ENCODE measurements at regions of chr7 and their contacts with region 1.

Region 1: GRCh38 chr7:129664029-129665012 is 52.8 kb downstream of the NRF1 start:
- DNase-seq: no peak
- ATAC-seq: peak; percentile 50 to 88 (median 78)
- H3K4me3 ChIP-seq: no peak overlapping the region
- H3K27ac ChIP-seq: no peak overlapping the region
- H3K4me1 ChIP-seq: no peaks in the 10 kb centered on the region
- H3K27me3 ChIP-seq: no peaks in the 10 kb centered on the region
- CTCF ChIP-seq: peak in 1 of 4 donors; percentile 15

Region 2: GRCh38 chr7:129825496-129826267 is 161.4 kb after region 1 on chr7:
- intact Hi-C with region 1: loop called in 2 of 3 experiments (anchors 5 to 10 kb)
- DNase-seq: peak; percentile 85 to 100 (median 94)
- ATAC-seq: peak; percentile 77 to 89 (median 85)
- H3K4me3 ChIP-seq: peak overlapping the region; percentile 49 to 71 (median 64)
- H3K27ac ChIP-seq: peak overlapping the region; percentile 16 to 75 (median 63)
- H3K4me1 ChIP-seq: peaks cover 0 to 13% (median 6%) of the 10 kb centered on the region in 3 donors
- H3K27me3 ChIP-seq: no peaks in the 10 kb centered on the region
- CTCF ChIP-seq: peak; percentile 95 to 100 (median 98)

Region 3: DNA sequence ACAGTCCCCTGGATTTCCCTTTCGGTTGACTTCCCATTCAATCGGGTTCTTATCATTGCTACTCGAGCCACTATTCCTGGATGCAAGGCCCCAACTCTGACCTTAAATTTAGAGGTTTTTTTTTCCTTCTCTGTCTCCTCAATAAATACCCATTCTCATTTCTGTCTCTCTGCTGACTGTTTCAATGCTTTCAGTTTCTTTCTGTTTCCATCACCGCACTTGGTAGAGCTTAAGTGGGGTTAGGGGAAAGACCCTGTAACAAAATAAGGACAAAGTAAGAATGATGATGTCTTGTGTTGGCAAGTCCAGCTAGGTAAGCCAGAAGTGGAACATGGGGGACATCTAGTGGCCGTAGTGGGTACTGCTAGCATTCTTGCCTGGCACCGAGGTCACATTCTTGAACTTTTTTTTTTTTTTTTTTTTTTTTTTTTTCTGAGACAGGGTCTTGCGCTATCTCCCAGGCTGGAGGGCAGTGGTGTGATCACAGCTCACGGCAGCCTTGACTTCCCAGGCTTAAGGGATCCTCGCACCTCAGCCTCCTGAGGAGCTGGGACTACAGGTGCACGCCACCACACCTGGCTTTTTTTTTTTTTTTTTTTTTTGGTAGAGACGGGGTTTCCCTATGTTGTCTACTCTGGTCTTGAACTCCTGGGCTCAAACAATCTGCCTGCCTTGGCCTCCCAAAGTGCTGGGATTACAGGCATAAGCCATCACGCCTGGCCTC is 346.5 kb after region 1 on chr7:
- intact Hi-C with region 1: loop called in 1 of 3 experiments (anchors 10 kb)
- DNase-seq: peak; percentile 73 to 93 (median 86)
- ATAC-seq: peak; percentile 35 to 70 (median 57)
- H3K4me3 ChIP-seq: no peak overlapping the region
- H3K27ac ChIP-seq: peak overlapping the region; percentile 88 to 95 (median 93)
- H3K4me1 ChIP-seq: peaks cover 18 to 23% (median 22%) of the 10 kb centered on the region in 3 donors
- H3K27me3 ChIP-seq: no peaks in the 10 kb centered on the region
- CTCF ChIP-seq: peak; percentile 83 to 91 (median 88)

Measured in pancreas (tissue), 10 donors.